HCT116 (cell line): ENCODE measurements at regions of chr9 and their contacts with region 1.

Region 1: GRCh38 chr9:126398403-126399058 is 71.9 kb downstream of the MVB12B start:
- DNase-seq: no peak
- ATAC-seq: peak; percentile 96
- H3K4me3 ChIP-seq: no peak overlapping the region
- H3K27ac ChIP-seq: no peak overlapping the region
- H3K4me1 ChIP-seq: peaks cover 11 to 13% of the 10 kb centered on the region in 2 experiments; a peak in 3 of 4 replicates
- H3K27me3 ChIP-seq: no peaks in the 10 kb centered on the region
- CTCF ChIP-seq: peak; percentile 89 to 100 (median 98)
- POLR2A ChIP-seq: no peak
- RAD21 ChIP-seq: peak; percentile 96

Region 2: DNA sequence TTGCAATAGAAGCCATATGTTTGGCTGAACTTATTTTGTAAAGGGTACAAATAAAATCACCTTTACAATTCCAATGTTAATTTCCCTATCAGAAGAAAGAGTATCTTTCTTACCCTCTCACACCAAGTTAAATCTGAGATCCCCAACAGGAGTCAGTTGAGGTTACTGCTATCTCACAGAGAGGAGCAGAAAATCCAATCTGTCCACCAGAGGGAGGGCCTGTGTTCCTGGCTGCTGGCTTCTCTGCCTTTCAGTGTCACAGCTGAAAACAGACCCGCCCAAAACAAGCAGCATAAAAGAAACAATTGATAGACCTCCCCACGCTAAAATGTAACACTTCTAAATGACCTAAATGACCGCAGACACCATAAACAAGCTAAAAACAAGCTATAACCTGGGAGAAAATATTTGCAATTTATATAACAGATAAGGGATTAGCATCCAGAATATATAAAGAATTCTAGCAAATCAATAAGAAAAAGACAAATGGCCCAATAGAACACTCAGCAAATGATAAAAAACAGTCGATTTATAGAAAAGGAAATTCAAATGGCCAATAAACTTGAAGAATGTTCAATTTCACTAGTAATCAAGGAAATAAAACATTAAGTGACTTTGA is 96.4 kb before region 1 on chr9:
- CTCF ChIA-PET with region 1: interaction called, 20 read pairs
- POLR2A ChIA-PET with region 1: no interaction called
- RAD21 ChIA-PET with region 1: interaction called, 3 to 5 read pairs
- intact Hi-C with region 1: loop called (anchors 1 kb)
- DNase-seq: peak; percentile 65
- ATAC-seq: peak; percentile 97
- H3K4me3 ChIP-seq: no peak overlapping the region
- H3K27ac ChIP-seq: no peak overlapping the region
- H3K4me1 ChIP-seq: peaks cover 0 to 8% of the 10 kb centered on the region in 2 experiments; a peak in 3 of 4 replicates
- H3K27me3 ChIP-seq: no peaks in the 10 kb centered on the region
- CTCF ChIP-seq: peak; percentile 86 to 88 (median 87)
- POLR2A ChIP-seq: no peak
- RAD21 ChIP-seq: peak; percentile 75

Region 3: GRCh38 chr9:126317513-126317912 is 81.0 kb before region 1 on chr9:
- CTCF ChIA-PET with region 1: interaction called, 5 read pairs
- POLR2A ChIA-PET with region 1: no interaction called
- RAD21 ChIA-PET with region 1: no interaction called
- intact Hi-C with region 1: loop called (anchors 5 kb)
- DNase-seq: no peak
- ATAC-seq: no peak
- H3K4me3 ChIP-seq: no peak overlapping the region
- H3K27ac ChIP-seq: no peak overlapping the region
- H3K4me1 ChIP-seq: no peaks in the 10 kb centered on the region
- H3K27me3 ChIP-seq: no peaks in the 10 kb centered on the region
- CTCF ChIP-seq: peak; percentile 33 to 47 (median 34); a peak in 5 of 6 replicates
- POLR2A ChIP-seq: no peak
- RAD21 ChIP-seq: peak; percentile 53

Region 4: DNA sequence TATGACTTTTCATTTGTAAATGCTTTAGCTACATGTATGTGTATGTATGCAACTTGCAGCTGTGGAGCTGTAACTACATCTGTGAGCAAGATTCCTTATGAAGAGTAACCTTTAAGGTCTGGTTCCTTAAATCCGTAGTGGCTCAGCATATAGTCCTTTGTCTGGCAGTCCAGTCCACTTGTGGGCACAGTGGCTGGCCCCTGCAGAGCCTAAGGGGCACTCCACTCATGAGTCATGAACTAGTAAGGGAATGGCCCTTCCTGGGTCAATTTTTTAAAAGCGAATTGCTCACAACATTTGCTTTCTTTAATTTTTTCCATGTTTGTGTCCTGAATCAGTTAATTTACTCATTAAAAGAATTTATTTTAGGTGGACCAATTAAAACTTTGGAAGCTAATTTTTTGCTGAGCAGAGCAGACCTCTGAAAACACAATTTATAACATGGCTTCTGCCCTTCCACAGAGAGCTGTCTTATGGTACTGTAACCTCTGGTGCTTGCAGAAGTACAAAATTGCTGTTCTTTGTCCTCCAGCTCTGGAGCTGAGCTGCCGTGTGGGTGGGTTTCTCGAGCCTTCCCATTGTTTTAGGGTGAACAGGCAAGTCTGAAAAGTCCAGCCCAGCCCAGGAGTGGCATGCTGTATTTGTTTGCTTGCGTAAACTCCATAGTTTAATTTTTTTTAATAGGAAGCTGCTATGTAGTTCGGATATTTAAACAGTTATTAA is 38.2 kb after region 1 on chr9:
- CTCF ChIA-PET with region 1: no interaction called
- POLR2A ChIA-PET with region 1: no interaction called
- RAD21 ChIA-PET with region 1: no interaction called
- intact Hi-C with region 1: no loop called
- DNase-seq: no peak
- ATAC-seq: no peak
- H3K4me3 ChIP-seq: no peak overlapping the region
- H3K27ac ChIP-seq: no peak overlapping the region
- H3K4me1 ChIP-seq: no peaks in the 10 kb centered on the region
- H3K27me3 ChIP-seq: no peaks in the 10 kb centered on the region
- CTCF ChIP-seq: no peak
- POLR2A ChIP-seq: no peak
- RAD21 ChIP-seq: no peak